ENCODE measurements at regions of chr1 and their contacts with region 1.

Region 1: GRCh38 chr1:239413916-239414315 is 27.5 kb downstream of the CHRM3 start:
- DNase-seq: no peak
- H3K4me3 ChIP-seq: no peak overlapping the region
- H3K27ac ChIP-seq: peak overlapping the region in 3 of 4 donors; percentile 14 to 57 (median 36)
- H3K4me1 ChIP-seq: peaks cover 0 to 7% (median 0%) of the 10 kb centered on the region in 4 donors
- H3K27me3 ChIP-seq: no peaks in the 10 kb centered on the region
- CTCF ChIP-seq: no peak
- EP300 ChIP-seq: no peak
- POLR2A ChIP-seq: no peak

Region 2: GRCh38 chr1:239458144-239458500 is 44.2 kb after region 1 on chr1:
- in situ Hi-C with region 1: no loop called
- intact Hi-C with region 1: no loop called
- DNase-seq: no peak
- H3K4me3 ChIP-seq: no peak overlapping the region
- H3K27ac ChIP-seq: no peak overlapping the region
- H3K4me1 ChIP-seq: peaks cover 0 to 4% (median 0%) of the 10 kb centered on the region in 4 donors
- H3K27me3 ChIP-seq: no peaks in the 10 kb centered on the region
- CTCF ChIP-seq: no peak
- EP300 ChIP-seq: no peak
- POLR2A ChIP-seq: no peak

Region 3: GRCh38 chr1:239587574-239588369 is 173.9 kb after region 1 on chr1:
- in situ Hi-C with region 1: no loop called
- intact Hi-C with region 1: no loop called
- DNase-seq: no peak
- H3K4me3 ChIP-seq: no peak overlapping the region
- H3K27ac ChIP-seq: no peak overlapping the region
- H3K4me1 ChIP-seq: peaks cover 0 to 6% (median 6%) of the 10 kb centered on the region in 4 donors
- H3K27me3 ChIP-seq: no peaks in the 10 kb centered on the region
- CTCF ChIP-seq: no peak
- EP300 ChIP-seq: no peak
- POLR2A ChIP-seq: no peak

Region 4: GRCh38 chr1:239898062-239898730 is 484.3 kb after region 1 on chr1:
- in situ Hi-C with region 1: loop called in 3 of 4 experiments (anchors 5 to 10 kb)
- intact Hi-C with region 1: no loop called
- DNase-seq: peak; percentile 78
- H3K4me3 ChIP-seq: peak overlapping the region in 1 of 4 donors; percentile 23
- H3K27ac ChIP-seq: peak overlapping the region in 1 of 4 donors; percentile 31
- H3K4me1 ChIP-seq: peaks cover 0 to 10% (median 4%) of the 10 kb centered on the region in 4 donors
- H3K27me3 ChIP-seq: no peaks in the 10 kb centered on the region
- CTCF ChIP-seq: peak; percentile 94 to 96 (median 95)
- EP300 ChIP-seq: no peak
- POLR2A ChIP-seq: no peak

Region 5: DNA sequence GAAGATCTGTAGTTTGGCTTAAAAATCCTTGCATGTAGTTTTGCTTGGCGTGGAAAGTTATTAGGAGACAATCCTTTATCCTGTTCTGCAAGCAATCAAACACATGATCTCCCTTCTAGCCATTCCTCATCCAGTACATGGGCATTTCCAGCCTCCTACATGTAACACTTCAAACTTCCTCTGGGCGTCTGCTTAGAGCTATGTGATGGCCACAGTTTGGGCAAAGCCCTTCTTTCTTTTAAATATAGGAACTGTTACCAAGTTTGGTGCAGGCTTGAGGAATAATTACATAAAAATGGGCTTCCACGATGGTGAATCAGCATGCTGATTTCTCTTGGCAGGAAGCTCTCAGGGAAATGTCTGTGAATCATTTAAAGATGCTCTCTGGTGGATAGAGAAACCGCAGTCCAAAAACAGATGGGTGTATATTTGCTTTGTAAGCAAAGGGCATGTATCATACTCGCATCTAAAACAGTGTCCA is 500.9 kb after region 1 on chr1:
- in situ Hi-C with region 1: loop called in 1 of 4 experiments (anchors 10 kb)
- intact Hi-C with region 1: no loop called
- DNase-seq: no peak
- H3K4me3 ChIP-seq: no peak overlapping the region
- H3K27ac ChIP-seq: peak overlapping the region in 2 of 4 donors; percentile 20 to 29
- H3K4me1 ChIP-seq: peaks cover 0 to 3% (median 0%) of the 10 kb centered on the region in 4 donors
- H3K27me3 ChIP-seq: no peaks in the 10 kb centered on the region
- CTCF ChIP-seq: no peak
- EP300 ChIP-seq: no peak
- POLR2A ChIP-seq: no peak

Measured in transverse colon (tissue), 4 donors.